WTC11 (cell line): ENCODE measurements at regions of chr22 and their contacts with region 1.

Region 1: DNA sequence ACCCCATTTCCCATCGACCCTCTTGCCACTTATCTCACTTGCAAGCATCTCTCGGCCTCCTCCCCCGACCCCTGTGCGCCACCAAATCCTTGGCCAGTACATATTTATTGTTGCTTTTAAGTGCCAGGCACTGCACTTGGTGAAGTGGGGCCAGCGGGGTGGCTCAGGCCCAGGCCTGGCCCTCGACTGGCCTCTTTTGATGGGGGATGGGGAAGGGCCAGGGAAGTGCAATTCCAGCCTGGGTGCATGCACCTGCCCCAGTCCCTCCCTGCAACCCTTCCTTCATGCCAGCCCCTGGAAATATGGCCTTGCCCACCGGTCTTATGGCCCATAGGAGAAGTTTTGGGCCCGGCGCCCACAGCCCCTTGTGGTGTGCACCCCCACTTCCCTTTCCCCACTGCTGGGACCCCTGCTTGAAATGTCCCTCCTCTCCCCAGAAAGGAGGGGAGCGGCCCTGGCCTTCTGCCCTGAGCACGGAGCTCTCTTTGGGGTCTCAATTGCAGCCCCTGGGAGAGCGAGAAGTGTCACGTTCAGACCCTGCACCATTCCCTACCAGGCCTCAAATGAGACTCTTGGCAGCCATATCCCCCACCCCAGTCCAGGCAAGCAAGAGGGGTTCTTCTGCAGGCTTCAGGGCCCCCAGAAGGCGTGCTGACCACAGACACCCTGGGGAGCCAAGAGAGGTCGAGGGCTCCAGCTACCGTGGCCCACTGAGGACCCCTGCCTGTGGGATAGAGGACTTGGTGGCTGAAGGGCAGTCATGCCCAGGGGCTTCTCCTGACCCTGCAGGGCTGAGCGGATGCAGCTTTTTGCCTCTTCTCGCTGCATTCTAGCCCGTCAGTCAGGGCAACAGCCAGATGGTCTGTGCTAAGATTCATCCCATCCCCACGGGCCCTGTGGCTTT is 961 bp downstream of the SUSD2 start:
- DNase-seq: peak; percentile 35
- ATAC-seq: 0 out of 2 replicates have a peak, but pooled peaks have one; percentile 6
- H3K4me3 Mint-ChIP-seq: no peak overlapping the region
- H3K27ac Mint-ChIP-seq: no peak overlapping the region
- H3K4me1 Mint-ChIP-seq: peaks cover 7% of the 10 kb centered on the region
- H3K27me3 Mint-ChIP-seq: no peaks in the 10 kb centered on the region
- CTCF ChIP-seq: no peak

Region 2: GRCh38 chr22:24244101-24244787 is 62.0 kb after region 1 on chr22:
- CTCF ChIA-PET with region 1: interaction called, 18 read pairs
- POLR2A ChIA-PET with region 1: no interaction called
- DNase-seq: no peak
- ATAC-seq: no peak
- H3K4me3 Mint-ChIP-seq: no peak overlapping the region
- H3K27ac Mint-ChIP-seq: no peak overlapping the region
- H3K4me1 Mint-ChIP-seq: peaks cover 18% of the 10 kb centered on the region
- H3K27me3 Mint-ChIP-seq: no peaks in the 10 kb centered on the region
- CTCF ChIP-seq: no peak

Region 3: DNA sequence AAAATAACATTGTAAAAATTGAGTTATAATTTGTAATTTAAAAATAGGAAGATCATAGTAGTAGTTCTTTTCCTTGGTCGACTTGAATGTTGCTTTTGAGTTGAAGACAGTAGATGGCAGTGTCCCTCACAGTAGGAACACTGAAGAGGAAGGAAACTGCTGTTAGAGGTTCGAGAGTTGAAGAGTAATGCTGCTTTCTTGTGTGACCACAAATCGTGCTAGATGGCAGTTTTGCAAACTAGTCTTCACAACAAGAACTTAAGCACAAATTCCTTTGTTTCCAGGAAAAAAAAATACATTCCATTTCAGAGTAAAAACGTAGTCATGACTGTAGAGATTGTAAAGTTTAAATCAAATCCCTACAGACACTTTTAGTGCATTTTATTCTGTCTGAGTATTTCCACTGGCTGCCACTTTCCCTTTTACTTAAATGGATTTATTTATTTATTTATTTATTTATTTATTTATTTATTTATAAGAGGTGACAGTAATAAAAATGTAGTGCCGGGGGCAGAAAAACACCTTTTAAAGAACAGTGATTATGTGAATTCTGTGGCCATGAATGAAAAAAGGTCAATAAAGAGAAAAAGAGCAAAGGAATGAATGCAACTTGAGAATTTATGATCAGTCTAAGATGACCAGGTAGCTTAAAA is 143.0 kb after region 1 on chr22:
- CTCF ChIA-PET with region 1: no interaction called
- POLR2A ChIA-PET with region 1: no interaction called
- DNase-seq: no peak
- ATAC-seq: no peak
- H3K4me3 Mint-ChIP-seq: no peak overlapping the region
- H3K27ac Mint-ChIP-seq: no peak overlapping the region
- H3K4me1 Mint-ChIP-seq: no peaks in the 10 kb centered on the region; the same call in 1 of the 2 replicates
- H3K27me3 Mint-ChIP-seq: no peaks in the 10 kb centered on the region
- CTCF ChIP-seq: no peak